HEK293T (cell line): ENCODE measurements at regions of chr5 and their contacts with region 1.

Region 1: DNA sequence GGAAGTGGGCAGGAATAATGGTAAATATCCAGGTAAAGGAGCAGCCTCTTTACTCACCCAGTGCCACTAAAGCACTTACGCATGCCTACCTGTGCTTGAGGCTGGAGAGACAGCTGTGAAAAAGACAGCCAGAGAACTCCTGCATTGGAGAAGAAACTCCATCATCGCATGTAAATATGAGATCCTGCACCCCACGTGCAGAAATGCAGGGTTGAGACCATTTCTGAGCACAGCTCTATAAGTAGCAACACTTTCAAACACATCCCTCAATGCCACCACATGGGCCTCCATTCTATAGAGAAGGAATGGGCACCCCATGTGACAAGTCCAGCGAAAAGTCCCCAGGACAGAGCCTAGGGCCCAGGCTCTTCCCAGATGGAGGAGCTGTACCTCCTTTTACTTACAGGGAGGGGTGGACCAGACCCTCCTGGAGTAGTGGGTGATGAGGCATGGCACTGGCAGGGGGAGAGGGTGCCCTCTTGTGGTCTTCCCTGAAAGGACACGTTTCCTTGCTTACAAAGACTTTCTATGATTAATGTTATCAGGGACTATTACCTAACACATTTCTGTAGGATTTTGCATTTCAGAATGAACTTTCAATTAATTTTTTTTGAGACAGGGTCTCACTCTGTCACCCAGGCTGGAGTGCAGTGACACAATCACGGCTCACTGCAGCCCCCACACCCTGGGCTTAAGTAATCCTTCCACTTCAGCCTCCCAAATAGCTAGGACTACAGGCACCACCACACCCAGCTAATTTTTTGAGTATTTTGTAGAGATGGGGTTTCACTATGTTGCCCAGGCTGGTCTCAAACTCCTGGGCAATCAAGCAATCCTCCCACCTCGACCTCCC is 55.3 kb upstream of the IL17B start:
- DNase-seq: peak; percentile 79

Region 2: GRCh38 chr5:149333711-149334443 is 100.5 kb before region 1 on chr5:
- CTCF ChIA-PET with region 1: no interaction called
- POLR2A ChIA-PET with region 1: no interaction called
- DNase-seq: no peak

Region 3: DNA sequence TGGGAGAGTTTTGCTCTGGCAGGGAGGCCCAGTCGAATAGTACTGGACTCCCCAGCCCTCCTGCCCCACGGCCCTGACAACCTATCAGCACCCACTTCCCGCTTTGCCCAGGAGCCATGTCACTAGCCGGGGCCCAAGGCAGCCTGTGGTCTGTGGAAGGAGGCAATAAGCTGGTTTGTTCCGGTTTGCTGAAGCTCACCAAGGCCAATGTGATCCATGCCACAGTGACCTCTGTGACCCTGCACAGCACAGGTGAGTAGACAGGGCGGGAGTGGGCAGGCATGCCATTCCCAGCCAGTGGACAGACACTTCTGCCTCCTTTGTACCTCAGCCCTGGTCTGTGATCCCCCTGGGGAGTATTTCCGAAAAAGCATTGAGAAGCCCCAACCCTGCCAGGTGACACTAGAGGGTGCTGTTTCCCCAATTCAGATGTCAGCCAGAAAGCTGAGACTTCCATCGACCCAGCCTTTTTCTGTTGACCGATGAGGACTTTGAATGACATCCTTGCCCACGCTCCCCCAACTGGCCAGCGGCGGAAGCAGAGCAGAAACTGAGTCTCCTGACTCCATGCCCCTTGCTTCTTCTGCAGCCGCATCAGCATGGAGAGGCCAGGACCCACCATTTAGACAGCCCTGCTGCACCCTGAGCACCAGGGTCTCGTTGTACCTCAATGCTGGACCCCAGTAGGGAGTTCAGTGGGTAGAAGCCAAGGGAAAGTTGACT is 67.0 kb before region 1 on chr5:
- CTCF ChIA-PET with region 1: interaction called, 16 read pairs
- POLR2A ChIA-PET with region 1: no interaction called
- DNase-seq: peak; percentile 80

Region 4: GRCh38 chr5:149381987-149382340 is 52.4 kb before region 1 on chr5:
- CTCF ChIA-PET with region 1: interaction called, 87 read pairs
- POLR2A ChIA-PET with region 1: no interaction called
- DNase-seq: peak; percentile 87

Region 5: DNA sequence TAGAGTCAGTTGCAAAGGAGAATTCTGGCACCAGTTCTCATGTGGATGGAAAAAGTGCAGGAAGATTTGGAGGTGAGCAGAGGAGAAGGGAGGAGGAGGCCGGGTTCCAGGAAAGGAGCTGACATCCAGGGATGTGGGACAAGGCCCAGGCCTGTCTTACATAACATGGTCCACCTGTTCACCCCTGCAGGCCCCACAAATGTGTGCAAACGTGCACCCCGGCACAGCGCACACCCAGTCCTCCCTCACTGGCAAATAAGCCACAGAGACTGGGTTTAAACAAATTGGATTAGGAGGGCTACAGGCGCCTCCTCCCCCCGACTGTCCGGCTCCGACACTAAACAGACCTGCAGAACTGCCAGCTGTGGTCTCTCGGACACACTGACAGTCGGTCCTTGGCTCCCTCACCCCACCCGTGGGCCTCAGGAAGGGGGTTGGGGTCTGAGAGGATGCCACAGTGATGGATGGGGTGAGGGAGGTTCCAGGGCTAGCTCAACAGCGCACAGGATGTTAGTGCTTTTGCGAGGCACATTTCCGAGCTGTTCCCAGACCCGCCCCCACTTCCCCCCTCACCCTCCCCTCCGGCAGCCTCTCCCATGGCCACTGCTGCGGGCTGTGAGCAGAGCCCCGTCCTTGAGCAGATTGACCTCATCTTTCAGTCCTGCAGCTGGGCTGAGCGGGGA is 11.9 kb before region 1 on chr5:
- CTCF ChIA-PET with region 1: interaction called, 14 read pairs
- POLR2A ChIA-PET with region 1: interaction called, 4 read pairs
- DNase-seq: no peak

Region 6: GRCh38 chr5:149448831-149449714 is 14.7 kb after region 1 on chr5:
- CTCF ChIA-PET with region 1: interaction called, 18 read pairs
- POLR2A ChIA-PET with region 1: interaction called, 6 read pairs
- DNase-seq: no peak

Region 7: DNA sequence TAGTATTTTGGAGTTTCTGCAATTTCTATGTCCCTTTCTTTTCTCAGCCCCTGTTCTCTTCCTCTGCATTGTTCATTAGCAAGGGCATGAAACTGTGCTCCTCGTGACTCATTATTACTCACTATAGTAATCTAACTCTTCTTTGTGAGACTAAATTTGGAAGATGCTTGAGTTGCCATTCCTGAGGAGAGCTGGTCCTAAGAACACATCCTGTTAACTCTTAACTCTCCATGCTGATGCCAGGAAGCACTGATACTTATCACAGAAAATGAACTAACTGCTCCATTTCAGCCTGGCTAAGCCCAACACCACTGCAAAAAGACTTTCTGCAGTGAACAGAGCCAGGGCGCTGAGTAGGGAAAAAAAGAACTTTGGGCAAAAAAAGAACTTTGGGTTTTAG is 127.5 kb after region 1 on chr5:
- CTCF ChIA-PET with region 1: interaction called, 14 read pairs
- POLR2A ChIA-PET with region 1: interaction called, 3 read pairs
- DNase-seq: no peak